Heart left ventricle (tissue), 16 donors: ENCODE measurements at regions of chr22 and their contacts with region 1.

Region 1: GRCh38 chr22:45994491-45995404 is 17.8 kb upstream of the WNT7B start:
- DNase-seq: peak; percentile 85 to 94 (median 87)
- ATAC-seq: peak; percentile 20 to 45 (median 43)
- H3K4me3 ChIP-seq: no peak overlapping the region
- H3K27ac ChIP-seq: peak overlapping the region in 9 of 12 donors; percentile 80 to 97 (median 92)
- H3K4me1 ChIP-seq: peaks cover 20 to 61% (median 48%) of the 10 kb centered on the region in 12 donors
- H3K27me3 ChIP-seq: no peaks in the 10 kb centered on the region
- CTCF ChIP-seq: peak; percentile 95 to 99 (median 98)
- POLR2A ChIP-seq: no peak

Region 2: GRCh38 chr22:45968751-45969413 is 25.9 kb before region 1 on chr22:
- intact Hi-C with region 1: no loop called
- DNase-seq: no peak
- ATAC-seq: no peak
- H3K4me3 ChIP-seq: no peak overlapping the region
- H3K27ac ChIP-seq: no peak overlapping the region
- H3K4me1 ChIP-seq: peaks cover 0 to 23% (median 14%) of the 10 kb centered on the region in 12 donors
- H3K27me3 ChIP-seq: peaks cover 39 to 91% (median 64%) of the 10 kb centered on the region in 9 donors
- CTCF ChIP-seq: no peak
- POLR2A ChIP-seq: no peak

Region 3: GRCh38 chr22:46013460-46014416 is 19.0 kb after region 1 on chr22:
- intact Hi-C with region 1: loop called in 1 of 10 experiments (anchors 1 kb)
- DNase-seq: peak; percentile 92 to 98 (median 95)
- ATAC-seq: peak; percentile 92 to 97 (median 95)
- H3K4me3 ChIP-seq: peak overlapping the region; percentile 45 to 77 (median 64)
- H3K27ac ChIP-seq: peak overlapping the region; percentile 92 to 98 (median 96)
- H3K4me1 ChIP-seq: peaks cover 0 to 39% (median 23%) of the 10 kb centered on the region in 12 donors
- H3K27me3 ChIP-seq: no peaks in the 10 kb centered on the region
- CTCF ChIP-seq: peak; percentile 62 to 84 (median 71)
- POLR2A ChIP-seq: peak; percentile 4 to 24

Region 4: GRCh38 chr22:46105494-46106278 is 110.9 kb after region 1 on chr22:
- intact Hi-C with region 1: no loop called
- DNase-seq: peak in 1 of 5 donors; percentile 57
- ATAC-seq: peak in 2 of 4 donors; percentile 10 to 12
- H3K4me3 ChIP-seq: no peak overlapping the region
- H3K27ac ChIP-seq: peak overlapping the region; percentile 70 to 88 (median 83)
- H3K4me1 ChIP-seq: peaks cover 31 to 100% (median 89%) of the 10 kb centered on the region in 12 donors
- H3K27me3 ChIP-seq: no peaks in the 10 kb centered on the region
- CTCF ChIP-seq: no peak
- POLR2A ChIP-seq: no peak

Region 5: GRCh38 chr22:46116491-46116958 is 121.8 kb after region 1 on chr22:
- intact Hi-C with region 1: loop called in 6 of 10 experiments (anchors 1 to 5 kb)
- DNase-seq: peak; percentile 94 to 97 (median 95)
- ATAC-seq: peak; percentile 73 to 83 (median 75)
- H3K4me3 ChIP-seq: no peak overlapping the region
- H3K27ac ChIP-seq: peak overlapping the region in 11 of 12 donors; percentile 49 to 86 (median 81)
- H3K4me1 ChIP-seq: peaks cover 19 to 68% (median 47%) of the 10 kb centered on the region in 12 donors
- H3K27me3 ChIP-seq: no peaks in the 10 kb centered on the region
- CTCF ChIP-seq: peak; percentile 57 to 99 (median 76)
- POLR2A ChIP-seq: no peak

Region 6: GRCh38 chr22:46309526-46310085 is 314.9 kb after region 1 on chr22:
- intact Hi-C with region 1: loop called in 8 of 10 experiments (anchors 1 to 10 kb)
- DNase-seq: peak in 3 of 5 donors; percentile 44 to 63 (median 54)
- ATAC-seq: peak; percentile 59 to 90 (median 72)
- H3K4me3 ChIP-seq: no peak overlapping the region
- H3K27ac ChIP-seq: peak overlapping the region in 2 of 12 donors; percentile 41 to 42
- H3K4me1 ChIP-seq: peaks cover 0 to 13% (median 0%) of the 10 kb centered on the region in 12 donors
- H3K27me3 ChIP-seq: no peaks in the 10 kb centered on the region
- CTCF ChIP-seq: no peak
- POLR2A ChIP-seq: no peak

Region 7: DNA sequence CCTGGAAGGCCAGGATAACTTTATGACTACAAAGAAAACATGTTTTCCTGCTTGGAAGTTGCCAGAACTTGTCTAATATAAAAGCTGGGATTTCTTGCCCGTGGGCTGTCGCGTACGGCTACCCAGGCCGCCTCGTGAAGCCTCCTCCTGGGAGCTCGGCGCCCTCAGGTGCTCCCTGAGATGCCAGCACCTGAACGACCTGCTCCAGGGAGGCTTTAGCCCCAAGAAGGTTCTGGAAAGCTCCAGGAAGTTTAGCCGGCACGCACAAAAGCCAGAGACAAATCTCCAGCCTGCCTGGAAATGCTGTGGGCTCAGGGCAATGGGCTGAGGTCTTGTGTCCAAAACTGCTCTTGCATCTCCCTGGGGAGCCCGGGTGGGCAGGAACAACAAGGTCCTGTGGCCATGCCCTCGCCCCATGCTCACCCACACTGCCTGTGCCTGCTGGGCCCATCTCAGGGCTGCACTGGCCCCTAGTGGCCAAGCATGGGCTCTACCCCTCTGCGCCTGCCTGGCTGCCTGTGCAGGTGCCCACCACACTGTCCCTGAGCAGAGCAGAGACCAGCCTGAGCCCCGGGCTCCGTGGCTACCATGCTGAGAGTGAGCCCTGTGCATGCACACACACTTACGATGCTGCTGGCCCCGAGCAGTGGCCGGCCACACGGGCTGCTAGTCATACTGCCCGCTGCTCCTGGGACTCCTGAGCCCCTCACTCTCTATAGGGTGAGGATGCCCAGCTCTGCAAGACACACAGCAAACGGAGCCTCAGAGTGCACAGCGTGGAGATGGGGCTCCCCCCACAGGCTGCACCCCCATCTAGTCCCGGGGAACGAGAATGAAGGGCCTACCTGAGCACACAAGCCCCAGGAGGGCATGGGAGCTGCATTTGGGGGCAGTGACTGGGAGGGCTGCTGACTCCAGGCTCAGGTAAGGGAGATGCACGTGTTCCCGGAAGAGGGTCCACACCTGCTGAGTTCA is 547.5 kb after region 1 on chr22:
- intact Hi-C with region 1: loop called in 2 of 10 experiments (anchors 10 kb)
- DNase-seq: peak; percentile 63 to 89 (median 77)
- ATAC-seq: peak; percentile 60 to 80 (median 74)
- H3K4me3 ChIP-seq: no peak overlapping the region
- H3K27ac ChIP-seq: no peak overlapping the region
- H3K4me1 ChIP-seq: peaks cover 3 to 45% (median 26%) of the 10 kb centered on the region in 12 donors
- H3K27me3 ChIP-seq: peaks cover 0 to 37% (median 11%) of the 10 kb centered on the region in 9 donors
- CTCF ChIP-seq: peak; percentile 79 to 97 (median 90)
- POLR2A ChIP-seq: no peak